Activated naive CD4-positive, alpha-beta T cell treated with anti-CD3 and anti-CD28 coated beads for 36 hours (primary cell): ENCODE measurements at regions of chr14 and their contacts with region 1.

Region 1: DNA sequence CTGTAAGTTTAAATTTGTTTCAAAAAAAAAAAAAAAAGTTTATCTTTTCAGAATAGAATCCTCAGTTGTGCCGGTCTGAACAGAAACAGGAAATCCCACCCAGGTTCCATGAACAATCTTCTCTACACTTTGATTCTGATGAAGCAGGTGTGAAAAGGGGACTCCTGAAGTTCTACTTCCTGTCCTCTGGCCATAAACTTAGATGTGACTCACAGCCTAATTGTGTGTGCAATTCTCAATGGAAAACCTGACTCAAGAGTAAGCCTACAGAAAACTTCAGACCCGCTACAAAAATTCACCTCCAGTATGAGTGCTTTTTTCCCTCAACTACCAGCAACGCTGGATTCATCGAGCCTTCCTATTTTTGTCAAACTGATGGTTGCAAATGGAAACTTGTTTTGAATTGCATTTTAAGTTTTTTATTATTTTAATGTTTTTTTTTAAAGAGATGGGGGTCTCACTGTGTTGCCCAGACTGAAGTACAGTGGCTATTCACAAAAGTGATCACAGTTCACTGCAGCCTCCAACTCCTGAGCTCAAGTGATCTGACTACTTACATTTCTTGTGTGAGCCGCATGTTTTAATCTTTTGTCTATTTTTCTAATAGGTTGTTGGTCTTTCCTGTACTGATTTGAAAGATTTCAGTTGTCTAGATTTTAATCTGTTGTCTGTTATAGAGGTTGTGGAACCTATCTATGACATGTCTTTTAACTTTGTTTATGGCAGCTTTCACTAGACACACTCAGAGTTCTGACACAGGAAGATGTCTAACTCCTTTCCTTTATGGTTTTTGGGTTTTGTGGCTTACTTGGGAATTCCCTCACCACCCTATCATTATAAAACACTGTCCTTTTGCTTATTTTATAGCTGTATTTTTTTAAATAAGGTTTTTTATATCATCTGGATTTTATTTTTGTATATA is 37.6 kb downstream of the ATG14 start:
- DNase-seq: peak; percentile 58
- H3K4me3 Mint-ChIP-seq: peak overlapping the region; percentile 45
- H3K27ac Mint-ChIP-seq: peak overlapping the region; percentile 97
- H3K4me1 Mint-ChIP-seq: peaks cover 43% of the 10 kb centered on the region
- H3K27me3 Mint-ChIP-seq: no peaks in the 10 kb centered on the region

Region 2: DNA sequence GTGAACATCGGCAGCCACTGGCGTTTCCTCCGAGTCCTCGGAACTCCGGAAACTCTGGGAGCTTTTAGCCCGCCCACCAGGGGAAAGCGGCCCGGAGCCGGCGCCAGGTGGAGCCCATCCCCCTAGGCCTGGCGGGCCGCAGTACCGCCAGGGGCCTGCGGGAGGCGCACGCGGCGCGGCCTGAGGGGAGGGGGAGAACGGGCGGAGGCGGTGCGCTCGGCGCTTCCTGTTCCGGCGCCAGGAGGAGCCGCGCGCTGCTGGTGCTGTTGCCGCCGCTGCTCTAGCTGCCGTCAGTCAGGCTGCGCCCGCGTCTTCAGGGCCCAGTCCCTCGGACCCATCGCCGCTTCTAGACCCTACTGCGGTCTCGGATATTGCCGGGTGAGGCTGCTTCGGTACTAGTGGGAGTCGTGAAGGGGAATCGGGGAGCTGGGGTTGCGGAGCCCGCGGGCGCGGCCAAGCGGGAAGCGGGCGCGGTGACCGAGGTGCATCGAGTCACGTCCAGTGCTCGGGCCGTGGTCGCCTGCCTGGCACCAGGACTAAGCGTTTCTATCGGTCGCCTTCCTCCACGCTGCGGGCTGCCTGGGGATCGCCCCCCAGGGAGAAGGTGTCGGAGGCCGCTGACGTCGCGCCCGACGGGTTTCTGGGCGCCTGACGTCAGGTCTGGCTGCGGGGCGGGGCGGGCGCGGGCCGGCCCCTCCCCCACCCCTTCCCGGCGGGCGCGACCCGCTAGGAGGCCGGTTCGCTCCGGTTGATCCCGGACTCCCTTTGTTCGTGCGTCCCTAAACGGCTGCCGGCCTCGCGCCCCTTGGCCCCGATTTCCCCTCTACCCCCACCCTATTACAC is 322.4 kb before region 1 on chr14 and contains the start of gene MAPK1IP1L:
- CTCF ChIA-PET with region 1: interaction called, 4 read pairs
- intact Hi-C with region 1: loop called (anchors 1 kb)
- DNase-seq: peak; percentile 90
- H3K4me3 Mint-ChIP-seq: peak within 1 kb of the TSS; percentile 86
- H3K27ac Mint-ChIP-seq: peak within 1 kb of the TSS; percentile 95
- H3K4me1 Mint-ChIP-seq: peaks cover 42% of the 10 kb centered on the region
- H3K27me3 Mint-ChIP-seq: no peaks in the 10 kb centered on the region
- total RNA-seq, gene MAPK1IP1L: 78.2 to 83.4 TPM

Region 3: GRCh38 chr14:55191203-55192053 is 182.6 kb before region 1 on chr14 and contains the start of gene DLGAP5:
- CTCF ChIA-PET with region 1: no interaction called
- intact Hi-C with region 1: loop called (anchors 1 kb)
- DNase-seq: peak; percentile 97
- H3K4me3 Mint-ChIP-seq: peak within 1 kb of the TSS; percentile 99
- H3K27ac Mint-ChIP-seq: peak within 1 kb of the TSS; percentile 89
- H3K4me1 Mint-ChIP-seq: peaks cover 26% of the 10 kb centered on the region
- H3K27me3 Mint-ChIP-seq: peaks cover 2% of the 10 kb centered on the region
- total RNA-seq, gene DLGAP5: 117 to 120 TPM

Region 4: DNA sequence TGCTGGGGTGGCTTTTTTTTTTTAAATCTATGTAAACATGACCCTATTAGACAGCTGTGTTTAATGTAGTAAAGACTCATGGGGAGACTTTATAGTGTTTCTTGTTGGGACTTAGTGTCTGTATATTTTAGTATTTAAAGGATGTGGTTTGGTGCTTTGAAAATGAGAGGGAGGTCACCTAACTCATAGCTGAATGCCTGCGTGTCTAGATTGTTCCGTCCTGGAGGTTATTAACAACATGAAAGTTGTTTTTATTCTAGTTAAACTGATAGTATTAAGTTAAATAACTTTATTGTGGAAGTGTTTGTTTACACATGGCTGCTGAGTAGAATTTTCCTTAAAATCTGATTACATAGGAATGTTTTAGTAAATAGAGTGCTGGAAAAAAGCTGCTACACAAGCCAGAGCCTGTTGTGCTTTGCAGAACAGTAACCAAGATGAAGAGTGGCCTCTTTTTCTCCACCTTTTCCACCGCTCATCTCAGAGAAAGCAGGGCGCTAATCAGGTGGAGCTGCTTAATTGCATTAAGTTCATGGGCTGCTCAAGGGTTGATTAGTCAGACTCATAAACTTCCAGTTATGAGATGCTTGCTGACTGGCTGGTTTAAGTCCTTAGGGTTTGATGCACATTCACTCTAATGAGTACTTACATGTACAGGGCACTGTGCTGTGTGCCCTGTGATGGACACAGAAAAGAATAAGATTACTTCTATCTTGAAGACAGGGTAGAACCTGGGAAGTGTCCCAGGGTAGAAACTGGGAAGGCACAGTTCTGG is 40.1 kb before region 1 on chr14:
- CTCF ChIA-PET with region 1: interaction called, 6 read pairs
- intact Hi-C with region 1: loop called (anchors 1 kb)
- DNase-seq: peak; percentile 21
- H3K4me3 Mint-ChIP-seq: peak overlapping the region; percentile 10
- H3K27ac Mint-ChIP-seq: peak overlapping the region; percentile 78
- H3K4me1 Mint-ChIP-seq: peaks cover 82% of the 10 kb centered on the region
- H3K27me3 Mint-ChIP-seq: no peaks in the 10 kb centered on the region

Region 5: DNA sequence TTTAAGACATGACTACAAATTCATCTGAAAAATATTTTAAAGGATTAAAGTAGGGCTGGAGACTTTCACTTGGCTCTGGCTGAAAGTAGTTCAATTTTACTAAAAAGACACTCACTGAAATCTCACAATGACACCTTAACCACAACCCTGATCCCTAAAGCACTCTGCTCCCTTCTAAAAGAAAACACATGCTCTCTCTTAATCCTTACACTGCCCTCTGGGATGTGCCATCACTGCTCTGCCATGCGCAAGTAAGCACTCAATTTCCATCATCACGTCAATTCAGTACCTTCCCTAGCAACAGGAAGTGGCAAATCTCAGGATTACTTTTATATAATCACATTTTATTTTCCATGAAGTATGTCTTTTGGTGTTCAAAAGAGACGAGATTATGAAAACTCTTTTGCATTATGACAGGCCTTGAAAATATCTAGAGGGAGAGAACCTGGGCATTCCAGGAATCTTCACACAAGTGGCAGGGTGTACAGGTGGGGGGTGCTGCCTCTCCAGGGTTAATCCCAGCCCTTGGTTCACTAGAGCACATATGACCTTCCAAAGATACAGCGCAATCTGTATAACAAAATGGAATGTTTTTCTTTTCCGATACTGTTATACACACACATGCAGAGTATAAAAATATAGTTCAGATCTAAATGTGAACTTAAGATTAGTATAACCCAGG is 30.3 kb after region 1 on chr14:
- CTCF ChIA-PET with region 1: no interaction called
- intact Hi-C with region 1: loop called (anchors 1 kb)
- DNase-seq: no peak
- H3K4me3 Mint-ChIP-seq: no peak overlapping the region
- H3K27ac Mint-ChIP-seq: peak overlapping the region; percentile 0
- H3K4me1 Mint-ChIP-seq: peaks cover 55% of the 10 kb centered on the region
- H3K27me3 Mint-ChIP-seq: no peaks in the 10 kb centered on the region

Region 6: DNA sequence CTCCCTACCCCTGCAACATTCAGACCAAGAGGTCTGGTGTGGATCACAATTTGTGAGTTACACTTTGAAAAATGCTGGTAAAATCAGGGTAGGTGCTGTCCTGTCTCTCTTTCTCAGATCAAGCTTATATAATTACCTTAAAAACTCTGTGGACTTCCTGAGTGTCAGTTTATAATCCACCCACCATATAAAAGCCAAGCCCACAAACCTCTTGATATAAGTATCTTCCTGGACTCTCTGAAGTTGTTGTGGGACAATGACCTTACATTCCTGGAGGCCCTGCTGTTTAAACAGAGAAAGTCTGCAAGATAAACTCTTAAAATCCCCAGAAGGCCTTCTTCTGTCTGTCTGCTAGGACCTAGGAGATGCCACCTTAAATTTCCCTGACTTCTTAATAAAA is 194.6 kb after region 1 on chr14:
- CTCF ChIA-PET with region 1: no interaction called
- intact Hi-C with region 1: no loop called
- DNase-seq: no peak
- H3K4me3 Mint-ChIP-seq: no peak overlapping the region
- H3K27ac Mint-ChIP-seq: no peak overlapping the region
- H3K4me1 Mint-ChIP-seq: no peaks in the 10 kb centered on the region
- H3K27me3 Mint-ChIP-seq: no peaks in the 10 kb centered on the region

Region 7: DNA sequence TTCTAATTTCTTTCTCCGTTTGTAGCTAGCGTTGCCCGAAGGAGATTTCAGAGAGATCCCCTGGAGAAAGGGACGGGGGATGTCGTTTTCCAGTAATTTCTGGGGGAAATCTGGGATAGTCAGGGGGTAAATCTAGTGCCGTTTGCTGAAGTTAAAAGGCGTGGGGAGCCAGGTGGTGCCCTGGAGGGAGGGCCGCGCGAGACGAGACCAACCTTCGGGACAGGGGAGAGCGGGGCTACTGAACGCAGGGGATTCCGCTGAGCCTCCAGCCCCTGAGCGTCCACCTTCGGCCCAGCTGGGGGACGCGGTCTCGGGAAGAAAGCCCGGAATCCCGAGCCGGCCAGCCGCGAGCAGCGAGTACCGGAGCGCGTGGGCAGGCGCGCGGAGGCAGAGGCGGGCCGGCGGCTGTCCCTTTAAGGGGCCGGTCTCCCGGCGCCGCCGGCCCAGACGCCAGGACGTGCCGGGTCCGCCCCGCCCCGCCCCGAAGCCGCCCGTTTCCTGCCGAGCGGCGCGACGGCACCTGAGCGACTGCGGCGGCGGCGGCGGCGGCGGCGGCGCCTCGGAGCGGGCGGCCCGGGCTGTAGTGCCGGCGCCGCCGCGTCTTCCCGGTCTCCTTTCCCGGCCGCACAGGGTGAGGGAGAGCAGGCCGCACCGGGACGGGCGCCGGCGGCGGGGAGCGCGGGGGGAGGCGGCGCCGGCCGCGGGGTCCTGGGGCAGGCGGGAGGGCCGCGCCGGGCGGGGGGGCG is 205.9 kb after region 1 on chr14 and contains the start of gene KTN1:
- CTCF ChIA-PET with region 1: no interaction called
- intact Hi-C with region 1: loop called (anchors 2 kb)
- DNase-seq: peak; percentile 84
- H3K4me3 Mint-ChIP-seq: peak within 1 kb of the TSS; percentile 94
- H3K27ac Mint-ChIP-seq: peak within 1 kb of the TSS; percentile 84
- H3K4me1 Mint-ChIP-seq: peaks cover 30% of the 10 kb centered on the region
- H3K27me3 Mint-ChIP-seq: no peaks in the 10 kb centered on the region
- total RNA-seq, gene KTN1: 90.0 to 94.1 TPM